ENCODE measurements at regions of chr9 and their contacts with region 1.

Region 1: GRCh38 chr9:112074250-112075008 is 100.7 kb downstream of the SUSD1 start:
- DNase-seq: peak; percentile 87
- H3K4me3 ChIP-seq: no peak overlapping the region
- H3K27ac ChIP-seq: peak overlapping the region; percentile 94
- H3K27me3 ChIP-seq: no peaks in the 10 kb centered on the region
- CTCF ChIP-seq: peak; percentile 98

Region 2: DNA sequence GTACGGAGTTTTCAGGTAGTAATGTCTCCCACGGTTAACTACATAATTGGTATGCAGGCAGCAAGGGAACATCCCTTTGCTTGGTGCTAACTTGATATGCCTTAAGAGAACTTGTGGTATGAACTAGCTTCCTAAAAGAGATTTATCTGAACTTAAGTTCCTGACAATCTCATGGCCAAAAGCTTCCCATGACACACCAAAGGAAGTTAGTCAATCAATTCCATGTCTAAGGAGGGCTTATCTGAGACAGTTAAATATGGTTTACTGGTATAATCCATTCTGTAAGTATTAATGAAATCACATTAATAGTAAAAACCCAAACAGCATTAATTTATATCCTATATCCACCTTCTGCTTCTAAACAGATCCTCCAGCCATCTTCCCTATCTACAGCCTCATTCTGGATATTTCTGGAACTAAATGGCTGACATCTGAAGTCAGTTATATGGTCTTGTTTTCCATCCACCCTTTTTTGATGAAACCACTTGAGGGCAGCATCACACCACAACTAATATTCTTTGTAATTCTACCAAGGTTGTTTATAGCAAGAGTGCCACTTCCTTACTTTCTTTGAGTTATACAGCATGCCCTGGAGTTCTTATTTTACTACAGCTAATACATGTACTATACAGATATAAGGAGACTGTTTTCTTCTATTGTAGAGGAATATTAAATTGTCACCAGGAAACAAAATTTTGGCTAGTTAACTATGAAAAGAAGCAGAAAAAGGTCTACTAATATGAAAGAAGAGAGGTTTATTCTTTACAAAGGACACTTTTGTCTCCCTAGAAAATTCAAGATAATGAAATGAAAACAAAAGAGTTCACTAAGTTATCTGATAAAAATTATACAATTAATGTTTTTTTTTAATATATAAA is 314.4 kb before region 1 on chr9:
- CTCF ChIA-PET with region 1: interaction called, 219 read pairs
- POLR2A ChIA-PET with region 1: interaction called, 5 read pairs
- DNase-seq: peak; percentile 74
- H3K4me3 ChIP-seq: no peak overlapping the region
- H3K27ac ChIP-seq: no peak overlapping the region
- H3K27me3 ChIP-seq: no peaks in the 10 kb centered on the region
- CTCF ChIP-seq: peak; percentile 72

Region 3: DNA sequence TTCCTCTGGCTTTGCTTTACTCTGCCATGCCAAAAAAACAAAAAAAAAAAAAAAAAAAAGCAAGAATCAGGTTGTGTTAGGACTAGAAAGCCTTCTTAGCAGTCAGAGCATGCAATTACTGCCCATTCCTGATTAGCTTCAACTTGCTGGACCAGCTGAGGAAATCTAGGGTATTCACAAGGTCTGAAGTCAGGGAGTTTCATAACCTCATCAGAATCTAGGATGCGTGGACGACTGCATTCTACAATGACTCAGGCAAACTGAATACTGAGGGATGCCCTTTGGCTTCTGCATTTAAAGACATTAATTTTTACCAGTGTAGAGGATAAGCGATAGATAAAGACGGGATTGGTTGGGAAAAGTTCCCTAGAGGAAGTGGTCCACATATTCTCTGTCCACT is 240.5 kb before region 1 on chr9:
- CTCF ChIA-PET with region 1: interaction called, 10 read pairs
- POLR2A ChIA-PET with region 1: no interaction called
- DNase-seq: no peak
- H3K4me3 ChIP-seq: no peak overlapping the region
- H3K27ac ChIP-seq: no peak overlapping the region
- H3K27me3 ChIP-seq: no peaks in the 10 kb centered on the region
- CTCF ChIP-seq: no peak

Region 4: DNA sequence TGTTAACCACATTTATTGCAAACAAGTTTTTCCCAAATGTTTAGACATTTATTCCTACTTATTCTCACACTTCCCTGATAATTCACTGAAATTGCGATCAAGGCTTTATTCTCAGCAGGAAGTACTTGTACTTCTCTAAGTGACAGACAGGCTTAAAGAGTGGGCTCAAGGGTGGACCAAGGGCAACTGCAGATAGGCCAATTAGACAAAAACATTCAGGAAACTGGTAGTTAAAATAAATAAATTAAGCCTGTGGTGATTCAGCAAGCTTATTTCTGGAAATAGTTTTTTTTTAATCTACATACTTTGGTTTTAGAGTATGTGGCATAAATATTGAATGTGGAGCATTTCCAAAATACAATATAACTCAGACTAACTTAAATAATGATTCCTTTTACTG is 41.7 kb before region 1 on chr9:
- CTCF ChIA-PET with region 1: interaction called, 10 read pairs
- POLR2A ChIA-PET with region 1: interaction called, 4 read pairs
- DNase-seq: no peak
- H3K4me3 ChIP-seq: no peak overlapping the region
- H3K27ac ChIP-seq: no peak overlapping the region
- H3K27me3 ChIP-seq: no peaks in the 10 kb centered on the region
- CTCF ChIP-seq: no peak

Region 5: GRCh38 chr9:112086627-112087026 is 12.2 kb after region 1 on chr9:
- CTCF ChIA-PET with region 1: interaction called, 10 read pairs
- POLR2A ChIA-PET with region 1: no interaction called
- DNase-seq: no peak
- H3K4me3 ChIP-seq: no peak overlapping the region
- H3K27ac ChIP-seq: no peak overlapping the region
- H3K27me3 ChIP-seq: no peaks in the 10 kb centered on the region
- CTCF ChIP-seq: peak; percentile 57

Region 6: DNA sequence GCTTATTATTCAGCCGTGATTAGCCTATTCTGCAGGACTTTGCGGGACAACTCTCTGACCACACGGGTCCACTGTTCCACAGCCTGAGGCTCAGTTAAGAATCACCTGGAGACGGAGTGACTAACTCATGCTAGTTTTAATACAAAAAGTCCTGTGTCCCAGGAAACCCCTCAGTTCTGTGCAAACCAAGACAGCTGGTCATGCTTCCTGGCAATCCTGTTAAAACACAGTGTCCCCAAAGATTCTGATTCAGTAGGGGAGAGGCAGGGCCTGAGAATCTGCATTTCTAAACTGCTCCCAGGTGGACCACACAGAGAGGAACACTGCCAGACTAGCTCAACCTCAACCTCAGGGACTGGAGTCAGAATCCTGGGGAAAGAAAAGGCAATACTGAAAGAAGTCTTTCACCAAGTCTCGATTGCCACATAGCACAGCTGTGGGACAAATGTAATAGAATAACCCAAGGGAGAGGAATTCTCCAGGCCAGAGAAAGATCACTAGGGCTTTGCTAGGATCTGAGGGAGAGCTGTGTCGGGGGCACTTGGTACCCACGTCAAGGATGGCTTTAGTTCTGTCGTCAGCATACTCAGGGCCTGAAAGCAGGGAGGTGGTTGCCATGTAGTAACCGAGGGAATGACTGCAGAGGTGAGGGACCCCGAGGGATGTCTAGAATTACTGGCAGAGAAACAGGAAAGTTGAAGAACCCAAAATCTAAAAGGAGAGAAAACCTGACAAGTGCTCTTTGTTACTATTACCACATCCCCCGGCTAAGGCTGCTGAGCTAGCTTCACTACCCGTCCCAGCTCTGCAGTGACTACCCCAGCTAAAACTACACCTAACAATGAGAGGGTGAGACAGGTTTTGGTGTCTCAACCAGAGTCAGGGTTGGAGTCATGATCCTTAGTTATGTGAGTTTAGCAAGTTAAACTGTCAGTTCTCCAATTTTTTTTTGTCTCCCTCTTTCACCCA is 92.0 kb after region 1 on chr9:
- CTCF ChIA-PET with region 1: no interaction called
- POLR2A ChIA-PET with region 1: no interaction called
- DNase-seq: no peak
- H3K4me3 ChIP-seq: no peak overlapping the region
- H3K27ac ChIP-seq: no peak overlapping the region
- H3K27me3 ChIP-seq: no peaks in the 10 kb centered on the region
- CTCF ChIP-seq: no peak